Activated CD8-positive, alpha-beta memory T cell treated with anti-CD3 and anti-CD28 coated beads, Interleukin-2, amount 10 ng/mL, durations not matched to agents 7 days and 5 days (primary cell): ENCODE measurements at regions of chr7 and their contacts with region 1.

Region 1: GRCh38 chr7:17769918-17770317 is 170.4 kb downstream of the SNX13 start:
- DNase-seq: peak; percentile 75
- ATAC-seq: peak; percentile 78
- H3K4me3 Mint-ChIP-seq: no peak overlapping the region
- H3K27ac Mint-ChIP-seq: no peak overlapping the region
- H3K4me1 Mint-ChIP-seq: peaks cover 10% of the 10 kb centered on the region
- H3K27me3 Mint-ChIP-seq: no peaks in the 10 kb centered on the region

Region 2: DNA sequence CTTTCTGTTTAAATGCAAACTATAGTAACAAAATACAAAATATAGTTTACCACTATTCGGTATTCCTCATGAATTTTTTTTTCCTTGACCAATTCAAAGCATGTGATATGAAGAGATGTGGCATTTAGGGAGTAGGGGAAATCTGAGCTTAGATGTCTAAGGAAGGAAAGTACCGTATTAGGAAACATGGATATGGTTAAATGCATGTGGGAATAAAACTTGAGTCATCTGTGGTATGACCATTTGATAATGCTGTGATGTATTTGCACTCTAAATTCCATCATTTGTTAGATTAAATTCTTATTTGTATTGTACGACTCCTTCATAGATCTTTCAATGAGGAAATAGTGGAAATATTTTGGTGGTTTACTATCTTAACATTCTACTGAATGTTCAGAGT is 451.8 kb before region 1 on chr7:
- CTCF ChIA-PET with region 1: no interaction called
- DNase-seq: no peak
- ATAC-seq: no peak
- H3K4me3 Mint-ChIP-seq: no peak overlapping the region
- H3K27ac Mint-ChIP-seq: no peak overlapping the region
- H3K4me1 Mint-ChIP-seq: peaks cover 9% of the 10 kb centered on the region
- H3K27me3 Mint-ChIP-seq: no peaks in the 10 kb centered on the region

Region 3: GRCh38 chr7:17991866-17992648 is 222.1 kb after region 1 on chr7:
- CTCF ChIA-PET with region 1: interaction called, 10 read pairs
- DNase-seq: no peak
- ATAC-seq: no peak
- H3K4me3 Mint-ChIP-seq: no peak overlapping the region
- H3K27ac Mint-ChIP-seq: no peak overlapping the region
- H3K4me1 Mint-ChIP-seq: peaks cover 2% of the 10 kb centered on the region
- H3K27me3 Mint-ChIP-seq: peaks cover 5% of the 10 kb centered on the region